ENCODE measurements at regions of chr5 and their contacts with region 1.

Region 1: GRCh38 chr5:43313035-43313853 is at the start of gene HMGCS1:
- DNase-seq: peak; percentile 100
- H3K4me3 ChIP-seq: peak within 1 kb of the TSS; percentile 72
- H3K27ac ChIP-seq: peak within 1 kb of the TSS; percentile 73
- H3K4me1 ChIP-seq: peaks cover 66% of the 10 kb centered on the region
- H3K27me3 ChIP-seq: no peaks in the 10 kb centered on the region
- CTCF ChIP-seq: peak; percentile 24; the same call in 1 of the 2 replicates
- total RNA-seq, gene HMGCS1: 152 and 189 TPM in 2 replicates

Region 2: DNA sequence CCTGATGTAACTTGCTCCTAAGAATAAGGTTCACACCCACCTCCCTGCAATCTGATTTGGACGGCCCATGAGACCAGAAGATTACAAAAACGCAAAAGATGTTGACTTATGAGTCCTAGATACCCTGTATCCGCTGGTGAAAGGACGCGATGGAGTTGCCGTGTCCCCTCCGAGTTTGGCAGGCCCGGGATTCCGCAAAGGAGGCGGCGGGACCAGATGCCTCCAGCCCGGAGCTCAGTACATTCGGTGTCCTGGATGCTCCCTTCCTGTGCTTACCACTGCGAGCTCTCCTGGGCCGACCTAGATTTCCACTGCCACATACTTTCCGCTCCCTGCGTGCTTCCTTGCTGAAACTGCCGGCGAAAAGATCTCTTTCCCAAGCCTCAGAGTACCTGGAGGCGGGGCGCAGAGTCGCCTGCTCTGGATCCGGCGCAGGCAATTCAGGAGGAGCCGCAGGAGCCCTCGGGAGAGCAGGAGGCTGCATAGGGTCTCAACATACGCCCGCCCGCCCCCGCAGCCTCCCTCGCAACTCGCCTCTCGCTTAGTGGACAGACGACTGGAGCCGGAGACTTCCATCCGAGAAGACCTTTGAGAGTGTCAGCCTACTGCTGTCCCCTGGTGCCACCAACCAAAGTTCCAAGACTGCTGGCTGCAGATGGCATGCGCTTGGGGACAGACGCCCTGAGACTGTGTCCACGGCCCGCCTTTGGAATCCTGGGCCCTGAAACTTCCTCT is 313.0 kb before region 1 on chr5:
- CTCF ChIA-PET with region 1: no interaction called
- POLR2A ChIA-PET with region 1: no interaction called
- intact Hi-C with region 1: loop called (anchors 5 kb)
- DNase-seq: peak; percentile 69 to 81
- H3K4me3 ChIP-seq: peak overlapping the region; percentile 55
- H3K27ac ChIP-seq: peak overlapping the region; percentile 59
- H3K4me1 ChIP-seq: peaks cover 29% of the 10 kb centered on the region
- H3K27me3 ChIP-seq: no peaks in the 10 kb centered on the region
- CTCF ChIP-seq: no peak

Region 3: DNA sequence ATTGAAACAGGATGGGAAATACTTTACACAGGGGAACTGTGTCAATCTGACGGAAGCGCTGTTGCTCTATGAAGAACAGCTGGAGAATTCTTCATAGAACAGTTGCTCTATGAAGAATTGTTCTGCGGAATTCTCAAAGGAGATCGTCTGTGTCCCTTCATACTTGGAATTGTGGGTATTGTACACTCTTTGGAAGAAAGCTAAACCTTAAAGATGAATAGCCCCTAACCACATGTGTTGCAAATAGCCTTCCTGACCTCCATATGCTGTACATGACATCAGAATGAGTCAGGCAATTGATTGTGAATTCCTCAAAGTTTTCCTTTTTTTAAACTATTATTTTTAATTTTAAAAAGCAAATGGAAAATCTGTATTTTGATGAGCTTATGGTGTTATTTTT is 105.6 kb before region 1 on chr5:
- CTCF ChIA-PET with region 1: no interaction called
- POLR2A ChIA-PET with region 1: no interaction called
- intact Hi-C with region 1: no loop called
- DNase-seq: no peak
- H3K4me3 ChIP-seq: no peak overlapping the region
- H3K27ac ChIP-seq: no peak overlapping the region
- H3K4me1 ChIP-seq: peaks cover 27% of the 10 kb centered on the region
- H3K27me3 ChIP-seq: no peaks in the 10 kb centered on the region
- CTCF ChIP-seq: no peak

Region 4: DNA sequence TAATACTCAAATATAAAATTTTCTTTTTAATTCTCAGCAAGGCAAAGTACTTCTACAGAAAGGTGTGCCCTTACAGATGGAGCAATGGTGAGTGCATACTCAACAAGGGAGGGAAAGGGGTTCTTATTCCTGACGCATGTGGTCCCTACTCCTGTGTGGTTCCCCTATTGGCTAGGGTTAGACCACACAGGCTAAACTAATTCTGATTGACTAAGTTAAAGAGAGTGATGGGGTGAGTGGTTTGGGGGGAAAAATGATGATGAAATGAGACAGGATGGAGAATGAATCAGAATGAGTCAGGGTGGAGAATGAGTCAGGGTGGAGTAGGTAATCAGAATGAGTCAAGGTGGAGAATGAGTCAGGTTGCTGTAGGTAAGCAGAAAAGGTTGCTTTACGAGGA is 22.9 kb after region 1 on chr5:
- CTCF ChIA-PET with region 1: no interaction called
- POLR2A ChIA-PET with region 1: no interaction called
- intact Hi-C with region 1: no loop called
- DNase-seq: no peak
- H3K4me3 ChIP-seq: no peak overlapping the region
- H3K27ac ChIP-seq: no peak overlapping the region
- H3K4me1 ChIP-seq: no peaks in the 10 kb centered on the region
- H3K27me3 ChIP-seq: peaks cover 7% of the 10 kb centered on the region
- CTCF ChIP-seq: no peak

Region 5: DNA sequence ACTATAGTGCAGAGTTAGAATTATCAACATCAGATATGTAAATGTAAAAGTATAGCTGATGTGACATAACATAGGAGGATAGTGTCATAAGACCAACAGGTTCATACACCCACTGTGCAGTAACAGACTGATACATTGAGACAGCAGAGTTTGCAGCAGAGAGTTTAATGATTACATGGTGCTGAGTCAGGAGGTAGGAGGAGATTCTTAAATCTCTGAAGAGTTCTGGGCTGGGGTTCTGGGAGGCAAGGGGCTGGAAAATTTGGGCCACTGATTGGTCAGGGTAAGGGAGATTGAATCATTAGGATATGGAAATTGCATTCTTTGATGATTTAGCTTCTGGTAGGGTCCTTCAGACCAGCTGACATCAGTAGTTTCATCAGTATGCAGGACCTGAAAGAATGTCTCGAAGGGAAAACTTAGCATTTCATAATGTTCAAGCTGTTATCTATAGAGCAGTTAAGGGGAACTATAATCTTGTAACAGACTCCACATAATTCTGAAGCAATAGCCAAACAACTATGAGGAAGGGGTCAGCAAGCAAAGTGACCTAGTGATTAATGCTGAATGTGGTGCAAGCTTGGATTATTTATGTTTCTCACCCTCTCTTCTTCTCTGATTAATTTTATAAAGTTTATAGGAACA is 63.4 kb after region 1 on chr5:
- CTCF ChIA-PET with region 1: no interaction called
- POLR2A ChIA-PET with region 1: interaction called, 12 read pairs
- intact Hi-C with region 1: no loop called
- DNase-seq: no peak
- H3K4me3 ChIP-seq: no peak overlapping the region
- H3K27ac ChIP-seq: no peak overlapping the region
- H3K4me1 ChIP-seq: no peaks in the 10 kb centered on the region
- H3K27me3 ChIP-seq: no peaks in the 10 kb centered on the region
- CTCF ChIP-seq: no peak

Region 6: GRCh38 chr5:43422143-43422542 is 108.9 kb after region 1 on chr5:
- CTCF ChIA-PET with region 1: no interaction called
- POLR2A ChIA-PET with region 1: no interaction called
- intact Hi-C with region 1: loop called (anchors 2 kb)
- DNase-seq: peak; percentile 56 to 95
- H3K4me3 ChIP-seq: no peak overlapping the region
- H3K27ac ChIP-seq: peak overlapping the region; percentile 68
- H3K4me1 ChIP-seq: peaks cover 43% of the 10 kb centered on the region
- H3K27me3 ChIP-seq: no peaks in the 10 kb centered on the region
- CTCF ChIP-seq: no peak

Region 7: DNA sequence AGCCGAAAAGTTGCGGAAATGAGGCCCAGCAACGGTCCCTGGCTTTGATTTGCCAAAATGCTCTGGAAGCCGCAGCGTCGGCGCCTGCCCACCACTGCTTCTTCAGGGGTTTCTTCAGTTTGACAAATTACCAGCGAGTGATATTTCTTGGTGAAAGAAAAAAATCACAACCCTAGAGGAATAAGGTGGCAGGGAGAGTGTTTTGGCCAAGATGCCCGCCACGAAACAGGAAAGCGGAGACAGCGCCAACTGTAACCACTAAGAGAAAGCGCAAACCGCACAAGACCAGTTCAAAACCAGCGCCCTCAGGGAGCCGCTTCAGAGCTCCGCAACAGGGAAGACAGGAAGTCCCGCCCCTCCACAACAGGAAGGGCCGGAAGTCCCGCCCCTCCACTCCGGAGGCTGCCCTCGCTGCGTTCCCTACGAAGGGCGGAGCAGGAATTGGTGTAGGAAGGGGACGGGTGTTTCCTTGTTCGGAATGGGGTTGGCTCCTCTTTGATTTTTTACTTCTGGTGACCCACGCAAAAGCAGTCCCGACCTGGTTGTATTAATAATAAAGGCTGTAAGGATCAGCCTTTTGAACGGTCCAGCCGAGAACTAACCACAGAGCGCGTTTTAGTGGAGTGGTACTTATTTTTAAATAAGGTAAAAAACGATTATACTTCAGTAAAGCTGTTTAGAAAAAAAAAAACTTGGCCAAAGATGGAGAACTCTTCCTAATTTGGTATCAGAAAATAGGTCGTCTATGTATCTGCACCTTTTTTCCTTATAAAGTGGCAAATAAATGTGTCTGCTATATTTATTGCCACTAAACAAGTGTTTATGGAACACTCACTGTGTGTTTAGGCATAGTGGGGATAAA is 201.8 kb after region 1 on chr5 and contains the start of gene C5orf34:
- CTCF ChIA-PET with region 1: no interaction called
- POLR2A ChIA-PET with region 1: interaction called, 8 read pairs
- intact Hi-C with region 1: loop called (anchors 10 kb)
- DNase-seq: peak; percentile 99 to 100
- H3K4me3 ChIP-seq: peak within 1 kb of the TSS; percentile 73
- H3K27ac ChIP-seq: peak within 1 kb of the TSS; percentile 72
- H3K4me1 ChIP-seq: peaks cover 22% of the 10 kb centered on the region
- H3K27me3 ChIP-seq: no peaks in the 10 kb centered on the region
- CTCF ChIP-seq: 0 out of 2 replicates have a peak, but pooled peaks have one; percentile 15
- total RNA-seq, gene C5orf34: 16.0 and 22.6 TPM in 2 replicates

Region 8: DNA sequence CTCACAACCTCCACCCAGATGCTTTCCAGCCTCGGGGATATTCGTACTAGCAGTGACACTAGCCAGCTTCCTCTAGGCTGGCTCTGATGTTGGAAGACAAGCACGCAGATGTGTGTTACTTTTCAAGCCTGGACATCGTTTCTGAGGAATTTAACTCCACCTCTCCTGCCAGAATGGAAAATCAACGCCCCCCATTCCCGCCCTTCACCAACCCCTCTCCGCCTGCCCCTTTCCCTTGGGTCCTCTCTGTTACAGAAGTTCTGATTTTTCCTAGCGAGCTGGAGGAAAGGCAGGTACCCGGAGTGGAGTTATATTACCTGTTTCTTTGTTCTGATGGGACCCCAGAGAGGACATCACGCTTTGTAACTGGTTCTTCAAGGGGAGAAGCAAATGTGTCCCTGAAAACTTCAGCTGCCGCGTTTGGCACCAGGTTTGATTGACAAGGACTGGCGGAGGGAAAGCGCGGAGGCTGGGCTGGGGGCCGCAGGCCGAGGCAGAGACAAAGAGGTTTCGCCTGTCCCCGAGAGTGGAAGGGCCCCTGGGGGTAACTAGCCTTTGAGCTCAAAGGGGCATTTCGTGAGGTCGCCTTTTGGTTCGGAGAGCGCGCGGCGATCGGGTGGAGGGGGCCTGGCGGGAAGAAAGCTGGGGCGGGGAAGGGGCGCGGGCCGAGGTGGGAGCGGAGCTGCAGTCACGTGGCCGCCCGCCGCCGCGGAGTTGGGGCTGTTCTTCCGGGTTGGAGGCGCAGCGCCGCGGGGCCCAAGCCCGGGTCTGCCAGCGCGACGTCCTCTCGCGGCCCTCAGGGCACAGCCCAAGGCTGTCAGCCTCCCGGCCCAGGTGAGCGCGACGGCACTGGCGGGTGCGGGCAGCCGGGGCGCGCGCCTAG is 289.5 kb after region 1 on chr5 and contains the start of gene NNT:
- CTCF ChIA-PET with region 1: no interaction called
- POLR2A ChIA-PET with region 1: interaction called, 5 read pairs
- intact Hi-C with region 1: loop called (anchors 5 kb)
- DNase-seq: peak; percentile 60 to 88
- H3K4me3 ChIP-seq: peak within 1 kb of the TSS; percentile 81
- H3K27ac ChIP-seq: no peak within 1 kb of the TSS
- H3K4me1 ChIP-seq: peaks cover 21% of the 10 kb centered on the region
- H3K27me3 ChIP-seq: no peaks in the 10 kb centered on the region
- CTCF ChIP-seq: 0 out of 2 replicates have a peak, but pooled peaks have one; percentile 6
- total RNA-seq, gene NNT: 92.6 and 112 TPM in 2 replicates

Measured in PC-9 (cell line).